T-cell (primary cell): ENCODE measurements at regions of chr7 and their contacts with region 1.

Region 1: GRCh38 chr7:29038463-29038862 is 80.3 kb upstream of the TRIL start:
- DNase-seq: peak in 4 of 35 experiments; percentile 1 to 15 (median 5)
- ATAC-seq: peak in 1 of 4 experiments; percentile 27
- H3K4me3 ChIP-seq: no peak overlapping the region
- H3K4me3 Mint-ChIP-seq: no peak overlapping the region
- H3K27ac ChIP-seq: no peak overlapping the region
- H3K27ac Mint-ChIP-seq: no peak overlapping the region
- H3K4me1 ChIP-seq: no peaks in the 10 kb centered on the region
- H3K4me1 Mint-ChIP-seq: no peaks in the 10 kb centered on the region
- H3K27me3 ChIP-seq: no peaks in the 10 kb centered on the region
- H3K27me3 Mint-ChIP-seq: no peaks in the 10 kb centered on the region

Region 2: GRCh38 chr7:29017713-29018112 is 20.8 kb before region 1 on chr7:
- CTCF ChIA-PET with region 1: no interaction called
- POLR2A ChIA-PET with region 1: no interaction called
- DNase-seq: no peak
- ATAC-seq: no peak
- H3K4me3 ChIP-seq: no peak overlapping the region
- H3K4me3 Mint-ChIP-seq: no peak overlapping the region
- H3K27ac ChIP-seq: no peak overlapping the region
- H3K27ac Mint-ChIP-seq: no peak overlapping the region
- H3K4me1 ChIP-seq: no peaks in the 10 kb centered on the region
- H3K4me1 Mint-ChIP-seq: no peaks in the 10 kb centered on the region
- H3K27me3 ChIP-seq: peaks cover 0 to 8% of the 10 kb centered on the region in 2 experiments
- H3K27me3 Mint-ChIP-seq: no peaks in the 10 kb centered on the region

Region 3: GRCh38 chr7:29091715-29092114 is 53.3 kb after region 1 on chr7:
- CTCF ChIA-PET with region 1: no interaction called
- POLR2A ChIA-PET with region 1: interaction called in 1 of 2 experiments, 10 read pairs
- DNase-seq: peak in 2 of 35 experiments; percentile 2 to 8
- ATAC-seq: peak in 1 of 4 experiments; percentile 86
- H3K4me3 ChIP-seq: peak overlapping the region in 1 of 2 donors; percentile 52
- H3K4me3 Mint-ChIP-seq: peak overlapping the region; percentile 44 to 82 (median 65)
- H3K27ac ChIP-seq: no peak overlapping the region
- H3K27ac Mint-ChIP-seq: peak overlapping the region in 1 of 2 donors; percentile 94
- H3K4me1 ChIP-seq: peaks cover 0 to 6% of the 10 kb centered on the region in 2 experiments
- H3K4me1 Mint-ChIP-seq: peaks cover 13 to 19% (median 15%) of the 10 kb centered on the region in 3 donors
- H3K27me3 ChIP-seq: peaks cover 0 to 7% of the 10 kb centered on the region in 2 experiments
- H3K27me3 Mint-ChIP-seq: peaks cover 6 to 19% of the 10 kb centered on the region in 2 donors